ENCODE measurements at regions of chr5 and their contacts with region 1.

Region 1: GRCh38 chr5:172469697-172470096 is 15.4 kb upstream of the SH3PXD2B start:
- DNase-seq: no peak
- H3K4me3 ChIP-seq: no peak overlapping the region
- H3K27ac ChIP-seq: no peak overlapping the region
- H3K4me1 ChIP-seq: no peaks in the 10 kb centered on the region
- H3K27me3 ChIP-seq: peaks cover 0 to 3% (median 0%) of the 10 kb centered on the region in 5 experiments

Region 2: DNA sequence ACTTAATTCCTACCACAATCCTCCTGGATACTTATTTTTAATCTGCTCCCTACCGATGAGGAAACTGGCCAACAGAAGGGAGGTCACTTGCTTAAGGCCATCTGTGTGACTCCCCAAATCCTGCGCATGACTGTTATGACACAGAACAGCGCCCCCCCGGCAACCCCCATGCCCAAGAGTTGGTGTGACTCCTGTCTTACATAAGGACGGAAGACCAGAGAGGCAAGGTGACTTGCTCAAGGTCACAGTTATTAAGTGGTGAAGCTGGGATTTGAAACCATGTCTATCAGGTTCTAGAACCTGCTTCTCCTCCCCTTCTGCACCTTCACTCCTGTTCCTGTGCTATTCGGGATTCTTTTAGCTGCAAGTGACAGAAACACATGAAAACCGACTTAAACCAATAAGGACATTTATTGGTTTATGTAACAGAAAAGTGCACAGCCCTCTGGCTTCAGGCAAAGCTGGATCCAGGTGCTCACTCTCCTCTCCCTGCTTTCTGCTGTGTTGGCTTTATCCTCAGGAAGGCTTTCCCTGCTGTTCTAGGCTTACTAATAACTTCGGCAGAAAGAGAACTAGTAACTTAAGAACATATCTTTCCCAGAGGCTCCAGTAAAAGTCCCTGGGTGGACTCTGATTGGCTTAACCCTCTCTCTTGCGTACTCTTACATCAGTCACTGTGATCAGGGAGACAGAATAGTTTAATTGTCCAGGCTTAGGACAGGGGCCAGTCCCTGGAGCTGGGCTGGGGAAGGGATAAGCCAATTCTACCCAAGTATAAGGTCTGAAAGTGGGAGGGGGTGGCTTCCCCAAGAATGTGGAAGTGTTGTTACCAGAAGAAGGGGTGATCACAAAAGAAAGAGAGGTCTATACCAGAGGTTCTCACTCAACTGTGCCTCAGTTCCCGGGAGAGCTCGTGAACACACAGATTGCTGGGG is 1006.5 kb before region 1 on chr5:
- CTCF ChIA-PET with region 1: no interaction called
- POLR2A ChIA-PET with region 1: no interaction called
- DNase-seq: no peak
- H3K4me3 ChIP-seq: no peak overlapping the region
- H3K27ac ChIP-seq: no peak overlapping the region
- H3K4me1 ChIP-seq: no peaks in the 10 kb centered on the region
- H3K27me3 ChIP-seq: peaks cover 0 to 4% (median 0%) of the 10 kb centered on the region in 5 experiments

Region 3: GRCh38 chr5:172458976-172459782 is 10.5 kb before region 1 on chr5:
- CTCF ChIA-PET with region 1: interaction called, 24 read pairs
- POLR2A ChIA-PET with region 1: no interaction called
- DNase-seq: no peak
- H3K4me3 ChIP-seq: no peak overlapping the region
- H3K27ac ChIP-seq: no peak overlapping the region
- H3K4me1 ChIP-seq: peaks cover 2 to 22% (median 12%) of the 10 kb centered on the region in 4 experiments
- H3K27me3 ChIP-seq: peaks cover 0 to 12% (median 0%) of the 10 kb centered on the region in 5 experiments

Region 4: GRCh38 chr5:172486451-172486850 is 16.8 kb after region 1 on chr5:
- CTCF ChIA-PET with region 1: no interaction called
- POLR2A ChIA-PET with region 1: no interaction called
- DNase-seq: no peak
- H3K4me3 ChIP-seq: no peak overlapping the region
- H3K27ac ChIP-seq: no peak overlapping the region
- H3K4me1 ChIP-seq: no peaks in the 10 kb centered on the region
- H3K27me3 ChIP-seq: peaks cover 0 to 2% (median 0%) of the 10 kb centered on the region in 5 experiments

Region 5: GRCh38 chr5:172542651-172543131 is 73.0 kb after region 1 on chr5:
- CTCF ChIA-PET with region 1: no interaction called
- POLR2A ChIA-PET with region 1: no interaction called
- DNase-seq: no peak
- H3K4me3 ChIP-seq: no peak overlapping the region
- H3K27ac ChIP-seq: no peak overlapping the region
- H3K4me1 ChIP-seq: no peaks in the 10 kb centered on the region
- H3K27me3 ChIP-seq: peaks cover 0 to 2% (median 0%) of the 10 kb centered on the region in 5 experiments

Measured in common myeloid progenitor, CD34-positive (primary cell).